Common myeloid progenitor, CD34-positive (primary cell): ENCODE measurements at regions of chr17 and their contacts with region 1.

Region 1: GRCh38 chr17:55295411-55296170 is 30.8 kb downstream of the HLF start:
- DNase-seq: peak; percentile 71 to 80 (median 77)
- H3K4me3 ChIP-seq: peak overlapping the region in 1 of 7 experiments; percentile 1
- H3K27ac ChIP-seq: peak overlapping the region in 1 of 2 experiments; percentile 11
- H3K4me1 ChIP-seq: peaks cover 4 to 36% (median 27%) of the 10 kb centered on the region in 4 experiments
- H3K27me3 ChIP-seq: no peaks in the 10 kb centered on the region

Region 2: DNA sequence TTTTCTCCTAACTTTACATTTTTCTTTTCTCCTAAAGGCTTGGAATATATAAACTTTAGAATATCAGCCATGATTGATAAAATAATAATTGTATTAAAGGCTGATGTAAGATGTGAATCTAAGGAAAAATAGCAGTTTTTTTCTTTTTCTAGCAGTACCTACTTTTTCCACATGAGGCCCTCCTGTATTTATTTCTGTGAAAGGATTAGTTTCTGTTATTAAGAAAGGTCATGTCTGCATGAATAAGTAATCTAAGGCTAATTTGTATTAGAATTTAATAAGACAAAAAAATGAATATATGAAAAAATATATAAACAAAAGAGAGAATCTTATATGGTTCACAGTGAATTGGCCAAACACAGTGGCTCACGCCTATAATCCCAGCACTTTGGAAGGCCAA is 241.7 kb before region 1 on chr17:
- CTCF ChIA-PET with region 1: interaction called, 21 read pairs
- POLR2A ChIA-PET with region 1: no interaction called
- DNase-seq: peak; percentile 29 to 51 (median 42)
- H3K4me3 ChIP-seq: no peak overlapping the region
- H3K27ac ChIP-seq: no peak overlapping the region
- H3K4me1 ChIP-seq: peaks cover 0 to 7% (median 2%) of the 10 kb centered on the region in 4 experiments
- H3K27me3 ChIP-seq: no peaks in the 10 kb centered on the region

Region 3: GRCh38 chr17:55238179-55238930 is 57.2 kb before region 1 on chr17:
- CTCF ChIA-PET with region 1: interaction called, 12 read pairs
- POLR2A ChIA-PET with region 1: interaction called, 3 read pairs
- DNase-seq: peak; percentile 92 to 94 (median 94)
- H3K4me3 ChIP-seq: peak overlapping the region; percentile 45 to 91 (median 77)
- H3K27ac ChIP-seq: no peak overlapping the region
- H3K4me1 ChIP-seq: peaks cover 4 to 31% (median 25%) of the 10 kb centered on the region in 4 experiments
- H3K27me3 ChIP-seq: no peaks in the 10 kb centered on the region

Region 4: GRCh38 chr17:55348749-55349354 is 53.3 kb after region 1 on chr17:
- CTCF ChIA-PET with region 1: interaction called, 11 read pairs
- POLR2A ChIA-PET with region 1: no interaction called
- DNase-seq: peak; percentile 59 to 75 (median 69)
- H3K4me3 ChIP-seq: peak overlapping the region in 1 of 7 experiments; percentile 18
- H3K27ac ChIP-seq: no peak overlapping the region
- H3K4me1 ChIP-seq: peaks cover 2 to 16% (median 7%) of the 10 kb centered on the region in 4 experiments
- H3K27me3 ChIP-seq: no peaks in the 10 kb centered on the region